Adrenal gland (tissue), 19 donors: ENCODE measurements at regions of chr9 and their contacts with region 1.

Region 1: DNA sequence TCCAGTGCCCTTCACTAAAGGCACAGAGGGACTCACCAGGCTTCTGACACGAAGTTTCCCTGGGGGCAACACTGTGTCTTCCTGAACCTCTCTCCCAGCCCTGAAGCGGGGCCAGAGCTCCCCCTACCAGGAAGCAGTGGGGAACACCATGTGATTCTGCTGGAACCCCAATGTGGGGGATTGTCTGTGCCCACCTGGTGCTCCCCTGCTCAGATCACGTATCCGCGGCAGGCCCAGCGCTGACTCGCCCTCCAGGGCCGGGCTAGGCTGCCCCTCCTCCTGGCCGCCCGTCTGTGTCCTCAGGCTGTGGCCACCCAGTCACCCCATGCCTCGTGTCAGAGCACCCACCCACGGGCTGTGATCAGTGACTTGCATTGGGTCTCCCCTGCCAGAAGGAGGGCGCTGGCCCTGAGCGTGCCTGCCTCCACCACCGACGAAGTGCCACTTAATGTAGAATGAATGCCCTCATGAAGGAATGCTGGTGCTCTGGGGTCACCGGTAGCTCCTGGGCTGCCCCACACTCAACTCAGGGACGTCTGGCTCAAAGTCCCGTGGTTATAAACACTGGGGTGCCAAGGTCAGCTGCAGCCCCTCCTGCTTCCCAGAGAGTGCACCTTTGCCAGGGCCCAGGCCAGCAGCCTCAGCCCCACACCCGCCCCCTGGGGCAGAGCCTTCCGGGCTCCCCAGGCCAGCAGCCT is 22.1 kb downstream of the SARDH start:
- DNase-seq: peak in 2 of 7 donors; percentile 19 to 26
- H3K4me3 ChIP-seq: no peak overlapping the region
- H3K27ac ChIP-seq: peak overlapping the region in 4 of 5 donors; percentile 36 to 92 (median 54)
- H3K4me1 ChIP-seq: peaks cover 0 to 11% of the 10 kb centered on the region in 2 donors
- H3K27me3 ChIP-seq: no peaks in the 10 kb centered on the region
- CTCF ChIP-seq: peak in 3 of 6 experiments; percentile 29 to 42 (median 29)
- POLR2A ChIP-seq: no peak

Region 2: GRCh38 chr9:133527444-133527920 is 188.5 kb before region 1 on chr9:
- intact Hi-C with region 1: loop called (anchors 5 to 10 kb)
- DNase-seq: no peak
- H3K4me3 ChIP-seq: no peak overlapping the region
- H3K27ac ChIP-seq: peak overlapping the region in 2 of 5 donors; percentile 21 to 83
- H3K4me1 ChIP-seq: peaks cover 4 to 16% of the 10 kb centered on the region in 2 donors
- H3K27me3 ChIP-seq: no peaks in the 10 kb centered on the region
- CTCF ChIP-seq: no peak
- POLR2A ChIP-seq: no peak

Region 3: GRCh38 chr9:133572821-133573361 is 143.1 kb before region 1 on chr9:
- intact Hi-C with region 1: loop called in 1 of 2 experiments (anchors 10 kb)
- DNase-seq: peak in 1 of 7 donors; percentile 28
- H3K4me3 ChIP-seq: no peak overlapping the region
- H3K27ac ChIP-seq: peak overlapping the region in 1 of 5 donors; percentile 13
- H3K4me1 ChIP-seq: no peaks in the 10 kb centered on the region
- H3K27me3 ChIP-seq: no peaks in the 10 kb centered on the region
- CTCF ChIP-seq: no peak
- POLR2A ChIP-seq: no peak